ENCODE measurements at regions of chr5 and their contacts with region 1.

Region 1: DNA sequence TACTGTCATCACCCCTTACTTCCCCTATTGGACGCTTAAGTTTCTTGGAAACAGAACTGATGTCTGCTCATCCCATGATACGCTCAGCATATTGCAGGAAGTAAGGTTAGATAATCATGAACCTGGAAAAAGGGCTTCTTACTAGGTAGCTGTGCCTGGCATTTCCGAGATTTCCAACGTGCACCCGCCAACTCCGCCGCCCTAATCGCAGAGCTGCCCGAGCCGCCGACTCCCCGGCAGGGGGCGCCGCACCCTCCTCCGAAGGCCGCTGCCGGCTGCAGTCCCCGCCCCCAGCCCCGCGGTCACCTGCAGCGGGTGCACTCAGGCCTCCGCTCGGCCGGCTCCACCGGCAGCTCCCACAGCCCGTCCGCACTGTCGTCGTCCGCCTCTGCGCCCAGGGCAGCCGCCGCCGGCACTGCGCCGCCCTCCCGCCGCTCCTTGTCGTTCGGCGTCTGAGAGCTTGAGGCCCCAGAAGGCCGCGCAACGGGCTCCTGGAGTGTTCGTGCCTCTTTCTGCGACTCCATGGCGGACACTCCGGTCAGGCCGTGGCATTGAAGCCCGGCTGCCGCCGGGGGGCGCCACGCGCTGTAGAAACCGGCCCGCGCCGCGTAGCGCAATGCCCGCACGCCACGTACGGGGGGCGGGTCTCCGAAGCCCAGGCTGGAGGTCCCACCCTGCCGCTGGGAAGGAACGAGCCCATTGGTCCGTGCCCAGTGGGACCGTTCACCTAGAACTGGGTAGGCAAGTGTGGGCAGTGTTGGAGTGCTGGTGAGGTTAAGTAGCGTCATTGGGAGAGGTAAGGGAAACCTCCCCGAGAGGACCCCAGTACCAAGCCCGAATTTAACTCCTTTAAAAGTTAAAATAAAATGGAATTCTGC is at the start of gene DTWD2:
- DNase-seq: peak; percentile 96 to 97 (median 96)
- ATAC-seq: peak; percentile 95 to 98 (median 98)
- H3K4me3 ChIP-seq: peak within 1 kb of the TSS; percentile 61 to 92 (median 70)
- H3K27ac ChIP-seq: peak within 1 kb of the TSS; percentile 91 to 95 (median 94)
- H3K4me1 ChIP-seq: peaks cover 0 to 16% (median 0%) of the 10 kb centered on the region in 4 donors
- H3K27me3 ChIP-seq: no peaks in the 10 kb centered on the region
- CTCF ChIP-seq: peak; percentile 81 to 96 (median 89)
- POLR2A ChIP-seq: peak; percentile 79
- total RNA-seq, gene DTWD2: 3.7 to 13.4 (median 7.0) TPM

Region 2: GRCh38 chr5:118774356-118774755 is 213.9 kb before region 1 on chr5:
- intact Hi-C with region 1: no loop called
- DNase-seq: no peak
- ATAC-seq: no peak
- H3K4me3 ChIP-seq: no peak overlapping the region
- H3K27ac ChIP-seq: no peak overlapping the region
- H3K4me1 ChIP-seq: peaks cover 0 to 13% (median 6%) of the 10 kb centered on the region in 4 donors
- H3K27me3 ChIP-seq: no peaks in the 10 kb centered on the region
- CTCF ChIP-seq: no peak
- POLR2A ChIP-seq: no peak

Region 3: DNA sequence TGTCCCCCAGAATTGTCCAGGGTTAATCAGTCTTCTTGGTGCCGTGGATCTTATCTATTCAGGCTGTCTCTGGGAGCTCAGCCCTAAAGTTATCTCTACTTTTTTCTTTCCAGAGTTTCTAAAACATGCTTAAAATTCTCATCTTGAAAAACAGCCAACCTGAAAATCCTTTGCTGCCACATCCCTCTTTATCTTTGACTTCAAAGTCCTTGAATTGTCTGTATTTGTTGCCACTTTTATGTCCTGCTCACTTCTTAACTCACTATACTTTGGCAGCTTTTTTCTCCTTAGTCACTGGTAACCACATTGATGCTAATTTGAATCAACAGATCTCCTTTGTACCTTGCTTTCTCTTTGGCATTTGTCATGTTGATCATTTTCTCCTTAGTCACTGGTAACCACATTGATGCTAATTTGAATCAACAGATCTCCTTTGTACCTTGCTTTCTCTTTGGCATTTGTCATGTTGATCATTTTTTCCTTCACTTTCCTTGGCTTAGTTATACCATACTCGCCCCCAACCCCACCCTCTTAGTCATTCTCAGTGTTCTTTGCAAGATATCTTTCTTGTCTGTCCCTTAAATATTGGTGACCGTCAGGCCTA is 91.2 kb after region 1 on chr5:
- intact Hi-C with region 1: no loop called
- DNase-seq: no peak
- ATAC-seq: peak in 1 of 4 donors; percentile 27
- H3K4me3 ChIP-seq: no peak overlapping the region
- H3K27ac ChIP-seq: no peak overlapping the region
- H3K4me1 ChIP-seq: no peaks in the 10 kb centered on the region
- H3K27me3 ChIP-seq: no peaks in the 10 kb centered on the region
- CTCF ChIP-seq: no peak
- POLR2A ChIP-seq: no peak

Region 4: DNA sequence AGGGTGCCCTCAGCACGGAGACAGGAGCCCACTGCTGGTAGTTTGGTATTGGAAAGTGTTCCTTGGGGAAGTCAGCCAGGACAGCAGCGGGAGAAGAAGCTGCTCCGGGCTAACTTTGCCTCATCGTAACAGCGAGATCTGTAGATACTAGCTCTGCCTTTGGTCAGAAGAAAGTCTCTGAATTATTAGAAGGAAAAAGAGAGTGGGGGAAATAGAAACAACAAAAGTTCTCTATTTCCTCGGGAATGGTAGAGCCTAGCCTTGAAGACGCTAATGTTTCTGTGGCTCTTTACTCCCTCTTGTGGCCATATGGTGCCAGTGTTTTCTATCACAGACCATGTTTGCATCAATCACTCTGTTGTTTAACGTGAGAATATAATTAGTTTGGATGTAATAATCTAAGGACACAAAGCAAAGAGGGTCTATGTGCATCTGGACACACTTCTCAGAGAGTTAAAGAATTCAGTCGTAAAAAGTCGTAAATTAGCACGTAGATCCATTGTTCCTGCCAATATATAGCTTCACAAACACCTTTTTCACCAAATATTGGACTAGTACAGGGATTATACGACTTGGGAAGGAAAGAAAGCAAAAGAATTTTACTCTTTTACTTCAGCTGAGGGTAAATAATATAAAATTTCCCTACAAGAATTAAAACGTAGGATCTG is 423.8 kb after region 1 on chr5:
- intact Hi-C with region 1: loop called in 1 of 2 experiments (anchors 10 kb)
- DNase-seq: peak; percentile 58 to 66 (median 63)
- ATAC-seq: peak; percentile 97 to 98 (median 98)
- H3K4me3 ChIP-seq: peak overlapping the region; percentile 43 to 58 (median 53)
- H3K27ac ChIP-seq: peak overlapping the region; percentile 26 to 56 (median 52)
- H3K4me1 ChIP-seq: peaks cover 0 to 5% (median 0%) of the 10 kb centered on the region in 4 donors
- H3K27me3 ChIP-seq: no peaks in the 10 kb centered on the region
- CTCF ChIP-seq: peak; percentile 91 to 97 (median 92)
- POLR2A ChIP-seq: no peak

Measured in right lobe of liver (tissue), 6 donors.